ENCODE measurements at regions of chr18 and their contacts with region 1.

Region 1: GRCh38 chr18:34867520-34867919 is 157.4 kb downstream of the DTNA start:
- DNase-seq: no peak
- H3K4me3 ChIP-seq: no peak overlapping the region
- H3K27ac ChIP-seq: no peak overlapping the region
- H3K4me1 ChIP-seq: peaks cover 0 to 3% (median 0%) of the 10 kb centered on the region in 4 donors
- H3K27me3 ChIP-seq: no peaks in the 10 kb centered on the region
- CTCF ChIP-seq: no peak
- EP300 ChIP-seq: no peak
- POLR2A ChIP-seq: no peak

Region 2: DNA sequence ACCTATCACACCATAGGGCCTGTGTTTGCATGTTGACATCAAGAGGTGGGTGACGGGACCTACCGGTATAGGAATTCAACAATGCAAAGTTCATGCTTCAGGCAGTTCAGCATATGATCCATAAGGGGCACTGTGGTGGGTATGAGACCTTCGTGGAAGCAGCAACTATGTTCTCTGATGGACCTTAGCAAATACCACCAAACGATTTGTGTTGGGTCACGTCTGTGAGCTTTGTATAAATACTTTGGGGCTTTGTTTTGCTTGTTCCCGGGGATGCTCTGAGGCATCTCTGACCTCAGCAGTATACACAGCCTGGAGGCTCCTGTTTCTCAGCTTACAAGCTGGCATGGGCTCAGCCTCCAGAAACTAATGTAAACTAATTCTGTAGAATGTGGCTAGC is 45.8 kb before region 1 on chr18:
- in situ Hi-C with region 1: no loop called
- intact Hi-C with region 1: no loop called
- DNase-seq: no peak
- H3K4me3 ChIP-seq: no peak overlapping the region
- H3K27ac ChIP-seq: no peak overlapping the region
- H3K4me1 ChIP-seq: peaks cover 0 to 9% (median 0%) of the 10 kb centered on the region in 4 donors
- H3K27me3 ChIP-seq: no peaks in the 10 kb centered on the region
- CTCF ChIP-seq: no peak
- EP300 ChIP-seq: no peak
- POLR2A ChIP-seq: no peak

Region 3: GRCh38 chr18:34971313-34971712 is 103.8 kb after region 1 on chr18:
- in situ Hi-C with region 1: loop called in 1 of 4 experiments (anchors 25 kb)
- intact Hi-C with region 1: no loop called
- DNase-seq: no peak
- H3K4me3 ChIP-seq: no peak overlapping the region
- H3K27ac ChIP-seq: no peak overlapping the region
- H3K4me1 ChIP-seq: peaks cover 0 to 5% (median 0%) of the 10 kb centered on the region in 4 donors
- H3K27me3 ChIP-seq: no peaks in the 10 kb centered on the region
- CTCF ChIP-seq: no peak
- EP300 ChIP-seq: no peak
- POLR2A ChIP-seq: no peak

Region 4: DNA sequence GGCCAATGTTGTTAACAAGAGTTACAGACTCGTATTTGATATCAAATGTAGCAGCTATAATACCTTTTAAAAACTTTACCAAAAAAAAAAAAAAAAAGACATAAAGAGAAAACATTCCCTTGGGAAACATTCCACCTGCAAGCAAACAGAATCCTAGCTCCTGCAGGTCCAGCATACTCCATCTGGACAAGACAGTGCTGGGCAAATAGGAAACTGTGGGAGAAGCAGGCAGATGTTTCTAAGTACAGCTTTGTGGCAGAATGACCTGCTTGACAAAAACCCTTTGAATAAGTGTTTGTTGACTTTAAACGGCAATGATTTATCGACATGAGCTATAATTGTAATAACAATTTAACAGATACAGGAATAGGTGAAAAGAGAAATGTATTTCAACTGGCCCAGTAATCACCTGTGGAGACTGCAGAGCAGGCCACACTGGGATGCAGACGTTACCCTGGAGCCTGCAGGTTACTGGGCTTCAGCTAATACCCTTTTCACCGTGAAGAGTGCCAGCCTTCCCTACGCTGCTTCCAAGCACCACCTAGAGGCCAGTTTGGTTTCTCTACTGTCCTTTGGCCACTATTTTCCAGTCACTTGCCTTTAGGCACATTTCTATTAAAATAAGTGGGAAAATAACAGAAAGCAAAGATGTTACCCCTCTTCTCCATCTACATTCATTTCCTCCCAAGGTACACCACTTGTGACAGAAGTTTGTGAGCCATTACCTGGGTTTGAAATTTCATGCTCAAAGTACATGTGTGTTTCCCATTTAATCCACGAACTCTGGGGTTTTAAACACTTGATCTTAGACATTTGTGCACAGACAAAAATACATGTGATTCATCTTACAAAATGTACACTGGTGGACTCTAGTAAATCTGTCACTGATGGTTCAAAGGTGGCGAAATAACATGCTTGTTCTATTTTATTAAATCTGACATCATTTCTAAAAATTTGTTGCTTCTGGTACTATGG is 276.4 kb after region 1 on chr18:
- in situ Hi-C with region 1: loop called in 2 of 4 experiments (anchors 25 kb)
- intact Hi-C with region 1: no loop called
- DNase-seq: peak; percentile 53
- H3K4me3 ChIP-seq: no peak overlapping the region
- H3K27ac ChIP-seq: peak overlapping the region in 1 of 4 donors; percentile 24
- H3K4me1 ChIP-seq: peaks cover 0 to 8% (median 0%) of the 10 kb centered on the region in 4 donors
- H3K27me3 ChIP-seq: no peaks in the 10 kb centered on the region
- CTCF ChIP-seq: peak; percentile 63 to 72 (median 67)
- EP300 ChIP-seq: no peak
- POLR2A ChIP-seq: no peak

Measured in transverse colon (tissue), 4 donors.